IMR-90 (cell line): ENCODE measurements at regions of chrX and their contacts with region 1.

Region 1: DNA sequence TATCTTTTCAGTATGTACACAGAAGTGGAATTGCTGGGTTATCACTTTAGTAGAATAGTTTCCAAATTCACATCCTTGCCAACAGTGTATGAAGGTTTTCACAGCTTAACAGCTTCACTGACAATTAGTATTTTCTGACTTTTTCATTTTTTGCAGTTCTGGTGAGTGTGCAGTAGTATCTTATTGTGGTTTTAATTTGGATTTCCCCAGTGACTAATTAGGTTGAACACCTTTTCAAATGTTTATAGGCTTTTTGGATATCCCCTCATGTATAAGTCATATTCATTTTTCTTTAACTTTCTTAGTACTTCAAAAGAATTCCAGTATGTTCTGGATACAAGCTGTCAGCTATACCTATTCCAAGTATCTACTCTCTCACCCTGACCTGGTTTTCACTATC is 37.1 kb downstream of the BRCC3 start:
- DNase-seq: no peak
- ATAC-seq: no peak
- H3K4me3 ChIP-seq: no peak overlapping the region
- H3K27ac ChIP-seq: no peak overlapping the region
- H3K4me1 ChIP-seq: no peaks in the 10 kb centered on the region
- H3K27me3 ChIP-seq: no peaks in the 10 kb centered on the region
- CTCF ChIP-seq: no peak
- POLR2A ChIP-seq: no peak
- RAD21 ChIP-seq: no peak

Region 2: DNA sequence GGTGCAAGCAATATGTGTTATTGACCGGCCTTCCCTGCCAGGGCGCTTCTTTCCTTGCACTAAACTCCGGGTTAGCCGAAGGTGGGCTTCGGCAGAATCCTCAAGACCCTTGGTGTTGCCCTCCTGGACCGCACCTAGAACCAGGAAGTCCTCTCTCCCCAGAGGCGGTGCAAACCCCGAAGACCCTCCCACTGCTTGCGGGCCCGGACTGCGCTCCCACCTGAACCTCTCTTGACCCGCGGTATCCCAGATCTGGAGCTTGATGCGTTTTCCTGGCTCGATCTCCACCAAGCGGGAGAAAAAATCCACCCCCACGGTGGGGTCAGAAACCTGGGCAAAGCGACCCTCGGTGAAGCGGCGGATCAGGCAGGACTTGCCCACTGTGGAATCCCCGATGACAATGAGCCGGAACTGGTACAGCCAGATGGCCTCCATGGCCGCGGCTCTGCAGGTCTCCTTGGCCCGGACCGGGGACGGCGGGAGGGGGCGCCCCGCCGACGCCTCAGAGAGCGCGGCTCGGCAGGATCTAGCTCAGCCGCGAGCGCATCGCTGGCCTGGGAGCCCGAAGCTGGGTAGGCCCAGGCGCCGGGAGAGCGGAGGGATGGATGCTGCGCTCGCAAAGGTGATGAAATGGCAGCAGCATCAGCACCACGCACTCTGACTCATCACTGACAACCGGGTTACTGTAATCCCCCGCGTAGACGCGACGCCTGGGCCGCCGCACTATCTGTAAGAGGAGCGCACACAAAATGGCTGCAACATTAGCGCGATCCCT is 155.6 kb after region 1 on chrX and contains the start of gene RAB39B:
- CTCF ChIA-PET with region 1: no interaction called
- POLR2A ChIA-PET with region 1: no interaction called
- dilution Hi-C with region 1: no loop called
- in situ Hi-C with region 1: no loop called
- intact Hi-C with region 1: no loop called
- DNase-seq: peak; percentile 68
- ATAC-seq: peak; percentile 97
- H3K4me3 ChIP-seq: no peak within 1 kb of the TSS
- H3K27ac ChIP-seq: no peak within 1 kb of the TSS
- H3K4me1 ChIP-seq: no peaks in the 10 kb centered on the region
- H3K27me3 ChIP-seq: no peaks in the 10 kb centered on the region
- CTCF ChIP-seq: no peak
- POLR2A ChIP-seq: no peak
- RAD21 ChIP-seq: no peak
- total RNA-seq, gene RAB39B: 0.54 and 0.56 TPM in 2 replicates

Region 3: DNA sequence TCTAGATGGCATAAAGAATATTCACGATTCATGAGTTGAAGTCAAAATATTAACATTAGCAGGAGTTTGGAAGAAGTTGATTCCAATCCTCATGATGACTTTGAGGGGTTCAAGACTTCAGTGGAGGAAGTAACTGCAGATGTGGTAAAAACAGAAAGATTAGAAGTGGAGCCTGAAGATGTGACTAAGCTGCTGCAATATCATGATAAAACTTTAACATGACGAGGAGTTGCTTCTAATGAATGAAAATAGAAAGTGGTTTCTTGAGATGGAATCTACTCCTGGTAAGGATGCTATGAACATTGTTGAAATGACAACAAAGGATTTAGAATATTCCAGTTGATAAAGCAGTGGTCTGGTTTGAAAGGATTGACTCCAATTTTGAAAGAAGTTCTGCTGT is 574.4 kb after region 1 on chrX:
- CTCF ChIA-PET with region 1: no interaction called
- POLR2A ChIA-PET with region 1: no interaction called
- dilution Hi-C with region 1: no loop called
- in situ Hi-C with region 1: no loop called
- intact Hi-C with region 1: loop called (anchors 5 kb)
- DNase-seq: no peak
- ATAC-seq: no peak
- H3K4me3 ChIP-seq: no peak overlapping the region
- H3K27ac ChIP-seq: no peak overlapping the region
- H3K4me1 ChIP-seq: no peaks in the 10 kb centered on the region
- H3K27me3 ChIP-seq: no peaks in the 10 kb centered on the region
- CTCF ChIP-seq: no peak
- POLR2A ChIP-seq: no peak
- RAD21 ChIP-seq: no peak